ENCODE measurements at regions of chr3 and their contacts with region 1.

Region 1: DNA sequence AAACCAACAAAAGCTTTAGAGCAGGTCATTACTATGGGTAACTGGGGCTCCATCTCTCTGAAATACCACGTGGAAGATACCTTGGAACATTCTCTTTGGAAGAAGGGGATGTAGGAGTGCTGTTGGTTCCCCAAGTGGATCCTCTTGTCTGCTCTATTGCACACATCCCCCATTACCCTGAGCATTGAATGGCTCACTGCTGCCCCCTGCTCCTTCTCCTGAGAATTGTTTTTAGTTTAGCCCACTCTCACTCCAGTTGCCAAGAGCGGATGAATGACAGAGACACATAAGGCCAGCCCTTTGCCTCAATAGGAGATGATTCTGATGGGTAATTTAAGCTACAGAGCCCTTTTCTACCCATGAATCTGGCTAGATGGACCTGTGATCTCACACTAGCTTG is 135.6 kb upstream of the SUCLG2 start:
- H3K4me3 ChIP-seq: no peak overlapping the region
- H3K27ac ChIP-seq: no peak overlapping the region
- H3K4me1 ChIP-seq: no peaks in the 10 kb centered on the region
- CTCF ChIP-seq: no peak

Region 2: GRCh38 chr3:67381667-67382272 is 408.3 kb before region 1 on chr3:
- CTCF ChIA-PET with region 1: interaction called, 13 read pairs
- POLR2A ChIA-PET with region 1: no interaction called
- H3K4me3 ChIP-seq: no peak overlapping the region
- H3K27ac ChIP-seq: no peak overlapping the region
- H3K4me1 ChIP-seq: no peaks in the 10 kb centered on the region
- CTCF ChIP-seq: no peak

Region 3: DNA sequence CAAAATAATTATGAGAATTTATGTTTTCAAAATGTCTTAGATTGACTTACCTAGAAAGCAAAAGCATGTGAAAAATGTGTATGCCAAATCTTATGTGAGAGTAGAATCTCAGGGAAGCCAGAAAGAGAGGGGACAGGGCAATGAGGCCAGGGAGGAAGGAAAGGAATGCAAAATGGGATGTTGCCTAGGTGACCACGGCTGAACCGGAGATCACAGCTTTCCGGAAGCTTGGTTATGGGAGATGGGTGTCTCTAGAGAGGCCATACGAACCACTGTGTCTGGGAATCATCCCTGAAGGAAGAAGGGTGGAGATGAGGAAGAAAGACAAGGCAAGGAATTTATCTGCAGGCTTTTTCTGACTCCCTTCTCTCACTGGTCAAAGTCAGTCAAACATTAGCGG is 211.6 kb before region 1 on chr3:
- CTCF ChIA-PET with region 1: no interaction called
- POLR2A ChIA-PET with region 1: no interaction called
- H3K4me3 ChIP-seq: no peak overlapping the region
- H3K27ac ChIP-seq: no peak overlapping the region
- H3K4me1 ChIP-seq: no peaks in the 10 kb centered on the region
- CTCF ChIP-seq: no peak

Region 4: GRCh38 chr3:67964596-67964995 is 174.6 kb after region 1 on chr3:
- CTCF ChIA-PET with region 1: no interaction called
- POLR2A ChIA-PET with region 1: no interaction called
- H3K4me3 ChIP-seq: no peak overlapping the region
- H3K27ac ChIP-seq: no peak overlapping the region
- H3K4me1 ChIP-seq: no peaks in the 10 kb centered on the region
- CTCF ChIP-seq: no peak

Region 5: DNA sequence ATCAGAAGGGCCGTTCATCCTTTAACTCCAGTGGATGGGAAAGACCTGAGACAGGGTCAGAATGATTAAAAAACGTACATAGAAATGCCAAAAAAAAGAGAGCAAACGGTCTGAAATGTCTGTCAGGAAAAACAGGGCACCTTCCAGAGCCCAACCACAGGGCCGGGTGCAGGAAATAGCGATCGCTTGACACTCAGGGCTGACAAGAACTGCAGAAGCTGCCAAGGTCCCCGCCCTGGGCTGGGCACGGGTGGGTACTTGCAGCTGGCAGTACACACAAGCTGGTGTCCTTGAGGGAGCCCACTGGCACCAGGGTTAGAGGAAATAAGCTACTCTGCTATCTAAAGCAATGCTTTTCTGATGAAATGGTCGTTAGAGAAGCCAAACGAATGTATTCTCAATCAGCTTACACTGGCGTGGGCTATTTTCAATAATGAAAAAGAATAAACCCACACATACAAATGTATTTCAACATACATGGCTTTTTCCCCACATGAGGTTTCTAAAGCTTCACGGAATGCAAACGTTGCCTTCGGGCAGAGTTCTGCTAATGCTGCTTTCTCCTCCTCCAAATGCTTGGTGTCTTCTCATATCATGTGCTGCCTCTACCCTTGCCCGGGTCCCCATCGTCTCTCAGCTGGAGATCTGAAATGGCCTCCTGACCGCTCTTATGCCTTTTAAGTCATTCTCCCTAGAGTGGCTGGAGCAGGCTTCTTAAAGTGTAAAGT is 1580.3 kb after region 1 on chr3:
- CTCF ChIA-PET with region 1: no interaction called
- POLR2A ChIA-PET with region 1: no interaction called
- H3K4me3 ChIP-seq: no peak overlapping the region
- H3K27ac ChIP-seq: no peak overlapping the region
- H3K4me1 ChIP-seq: no peaks in the 10 kb centered on the region
- CTCF ChIP-seq: no peak